ENCODE measurements at regions of chr1 and their contacts with region 1.

Region 1: DNA sequence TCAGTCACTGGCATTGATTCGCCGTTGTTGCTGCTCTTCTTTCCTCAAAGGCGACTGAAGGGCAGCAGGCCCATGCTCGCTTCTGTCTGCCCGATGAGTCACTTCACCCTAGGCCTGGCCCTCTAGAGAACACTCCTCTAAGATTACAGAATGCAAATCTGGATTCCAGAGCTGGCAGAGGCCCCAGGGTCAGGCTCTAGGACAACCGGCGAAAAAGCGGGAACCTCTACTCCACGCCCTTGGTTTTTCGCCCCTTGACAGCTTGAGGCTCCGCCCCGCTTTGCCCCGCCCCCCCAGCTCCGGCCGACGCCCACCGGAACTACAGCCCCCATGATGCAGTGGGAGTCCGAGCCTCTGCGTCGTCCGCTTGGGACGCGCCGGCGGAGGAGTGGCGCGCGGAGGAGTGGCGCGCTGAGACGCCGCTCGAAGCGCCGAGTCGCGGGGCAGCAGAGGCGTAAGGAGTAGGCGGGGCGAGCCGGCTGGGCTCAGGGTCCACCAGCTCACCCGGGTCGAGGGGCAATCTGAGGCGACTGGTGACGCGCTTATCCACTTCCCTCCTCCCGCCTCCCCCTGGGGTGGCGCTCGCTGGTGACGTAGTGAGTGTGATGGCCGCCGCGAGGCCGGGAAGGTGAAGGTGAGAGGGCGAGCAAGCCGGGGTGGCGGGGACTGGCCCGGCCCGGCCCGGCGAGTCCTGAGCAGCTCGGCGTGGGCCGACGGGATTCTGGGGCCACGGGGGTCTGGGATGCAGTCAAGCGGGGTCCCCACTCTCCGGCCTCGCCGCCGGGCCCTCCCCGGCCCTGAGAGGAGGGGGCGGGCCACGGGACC is at the start of gene MFN2:
- DNase-seq: peak; percentile 97
- H3K4me3 Mint-ChIP-seq: peak within 1 kb of the TSS; percentile 78
- H3K27ac Mint-ChIP-seq: peak within 1 kb of the TSS; percentile 99
- H3K4me1 Mint-ChIP-seq: peaks cover 29% of the 10 kb centered on the region
- H3K27me3 Mint-ChIP-seq: no peaks in the 10 kb centered on the region
- CTCF ChIP-seq: no peak
- total RNA-seq, gene MFN2: 95.6 and 105 TPM in 2 replicates

Region 2: GRCh38 chr1:11784993-11785769 is 194.9 kb before region 1 on chr1:
- CTCF ChIA-PET with region 1: no interaction called
- POLR2A ChIA-PET with region 1: no interaction called
- intact Hi-C with region 1: no loop called
- DNase-seq: peak; percentile 69
- H3K4me3 Mint-ChIP-seq: no peak overlapping the region
- H3K27ac Mint-ChIP-seq: no peak overlapping the region
- H3K4me1 Mint-ChIP-seq: peaks cover under 1% of the 10 kb centered on the region
- H3K27me3 Mint-ChIP-seq: no peaks in the 10 kb centered on the region
- CTCF ChIP-seq: peak; percentile 87

Region 3: DNA sequence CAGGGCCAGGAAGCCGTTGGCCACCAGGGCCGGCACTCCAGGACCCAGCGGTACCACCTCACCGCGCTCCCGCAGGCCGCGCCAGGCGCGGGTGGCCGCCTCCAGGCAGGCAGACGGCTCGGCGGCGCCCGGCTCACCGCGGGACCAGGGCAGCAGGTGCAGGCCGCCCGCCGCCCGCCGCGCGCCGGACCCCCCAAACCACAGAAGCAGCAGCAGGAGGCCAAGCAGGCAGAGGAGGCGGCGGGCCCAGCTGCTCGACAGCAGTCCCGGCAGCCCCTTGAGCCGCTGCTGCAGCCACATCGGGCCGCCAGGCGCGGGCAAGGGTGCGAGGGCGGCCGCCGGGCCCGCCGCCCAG is 54.1 kb before region 1 on chr1:
- CTCF ChIA-PET with region 1: no interaction called
- POLR2A ChIA-PET with region 1: interaction called, 24 read pairs
- intact Hi-C with region 1: no loop called
- DNase-seq: no peak
- H3K4me3 Mint-ChIP-seq: peak overlapping the region; percentile 75
- H3K27ac Mint-ChIP-seq: peak overlapping the region; percentile 60
- H3K4me1 Mint-ChIP-seq: peaks cover 22% of the 10 kb centered on the region
- H3K27me3 Mint-ChIP-seq: no peaks in the 10 kb centered on the region
- CTCF ChIP-seq: no peak

Region 4: DNA sequence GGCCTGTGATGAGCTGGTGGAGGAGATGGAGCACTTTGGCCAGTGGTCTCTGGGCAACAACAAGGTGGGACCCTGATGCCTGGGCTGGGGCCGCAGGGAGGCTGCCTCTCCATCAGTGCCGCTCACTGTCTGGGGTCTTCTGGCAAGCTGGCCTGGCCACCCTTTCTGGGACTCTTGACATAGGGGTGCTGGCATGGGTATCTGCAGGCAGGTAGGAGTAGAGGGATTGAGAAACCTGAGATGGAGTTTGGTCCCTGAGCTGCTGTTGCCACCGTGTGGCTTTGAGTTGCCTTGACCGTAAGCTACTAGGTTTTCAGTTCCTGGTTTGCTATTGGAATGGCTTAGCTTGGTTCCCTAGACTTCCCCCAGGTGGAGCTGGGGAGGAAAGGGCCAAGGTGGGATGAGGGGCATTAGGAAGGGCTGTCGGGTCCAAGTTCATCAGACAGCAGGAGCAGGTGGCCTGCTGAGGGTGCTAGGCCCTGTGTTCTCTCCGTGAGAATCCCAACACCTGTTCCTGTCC is 13.0 kb before region 1 on chr1:
- CTCF ChIA-PET with region 1: interaction called, 12 read pairs
- POLR2A ChIA-PET with region 1: interaction called, 53 read pairs
- intact Hi-C with region 1: no loop called
- DNase-seq: peak; percentile 79
- H3K4me3 Mint-ChIP-seq: peak overlapping the region; percentile 40
- H3K27ac Mint-ChIP-seq: peak overlapping the region; percentile 23
- H3K4me1 Mint-ChIP-seq: no peaks in the 10 kb centered on the region
- H3K27me3 Mint-ChIP-seq: no peaks in the 10 kb centered on the region
- CTCF ChIP-seq: peak; percentile 65

Region 5: GRCh38 chr1:12001249-12001917 is 21.3 kb after region 1 on chr1:
- CTCF ChIA-PET with region 1: interaction called, 3 read pairs
- POLR2A ChIA-PET with region 1: interaction called, 21 read pairs
- intact Hi-C with region 1: no loop called
- DNase-seq: peak; percentile 61
- H3K4me3 Mint-ChIP-seq: no peak overlapping the region
- H3K27ac Mint-ChIP-seq: peak overlapping the region; percentile 79
- H3K4me1 Mint-ChIP-seq: peaks cover 11% of the 10 kb centered on the region
- H3K27me3 Mint-ChIP-seq: no peaks in the 10 kb centered on the region
- CTCF ChIP-seq: peak; percentile 10

Region 6: DNA sequence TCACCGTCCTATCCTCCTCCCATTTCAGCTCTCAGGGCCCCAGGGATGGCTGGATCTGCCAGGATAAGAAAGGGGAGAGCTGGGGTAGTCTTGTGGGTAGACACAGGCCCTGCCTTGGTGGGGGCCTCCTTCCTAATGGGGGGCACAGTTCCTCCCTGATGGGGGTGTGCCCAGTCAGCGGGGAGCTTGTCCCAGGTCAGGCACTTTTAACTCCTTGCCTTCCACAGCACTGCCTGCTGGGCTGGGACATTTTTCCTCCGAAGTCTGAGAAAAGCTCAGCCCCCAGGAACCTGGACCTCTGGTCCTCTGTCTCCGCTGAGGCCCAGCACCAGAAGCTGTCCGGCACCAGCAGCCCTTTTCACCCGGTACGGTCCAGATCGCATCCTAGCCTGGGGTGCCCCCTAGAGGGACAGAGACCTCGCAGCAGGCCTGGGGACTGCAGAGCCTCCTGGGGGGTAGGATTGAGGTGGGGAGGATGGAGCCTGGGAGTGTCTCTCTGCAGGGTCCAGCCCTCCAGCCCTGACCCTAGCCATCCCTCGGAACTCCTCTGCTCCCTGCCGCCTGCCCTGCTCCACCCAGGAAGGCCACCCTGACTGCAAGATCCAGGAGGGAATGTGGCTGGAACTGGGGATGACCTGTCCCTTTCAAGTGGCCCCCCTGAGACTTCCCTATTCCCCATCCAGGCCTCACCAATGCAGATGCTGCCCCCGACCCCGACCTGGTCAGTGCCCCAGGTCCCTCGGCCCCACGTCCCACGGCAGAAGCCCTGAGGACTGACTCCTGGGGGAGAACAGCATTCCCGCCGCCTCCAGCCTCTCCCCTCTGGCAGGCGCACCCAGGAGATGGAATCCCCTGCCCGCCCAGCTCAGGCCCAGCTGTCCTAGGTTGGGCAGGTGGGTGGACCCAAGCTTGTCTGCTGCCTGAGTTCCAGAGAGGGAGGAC is 51.2 kb after region 1 on chr1:
- CTCF ChIA-PET with region 1: no interaction called
- POLR2A ChIA-PET with region 1: no interaction called
- intact Hi-C with region 1: loop called (anchors 1 kb)
- DNase-seq: peak; percentile 40
- H3K4me3 Mint-ChIP-seq: no peak overlapping the region
- H3K27ac Mint-ChIP-seq: no peak overlapping the region
- H3K4me1 Mint-ChIP-seq: no peaks in the 10 kb centered on the region
- H3K27me3 Mint-ChIP-seq: no peaks in the 10 kb centered on the region
- CTCF ChIP-seq: peak; percentile 56

Region 7: GRCh38 chr1:12745992-12746323 is 765.9 kb after region 1 on chr1 and contains the start of gene CFAP107:
- CTCF ChIA-PET with region 1: no interaction called
- POLR2A ChIA-PET with region 1: no interaction called
- intact Hi-C with region 1: no loop called
- DNase-seq: no peak
- H3K4me3 Mint-ChIP-seq: no peak within 1 kb of the TSS
- H3K27ac Mint-ChIP-seq: no peak within 1 kb of the TSS
- H3K4me1 Mint-ChIP-seq: peaks cover 10% of the 10 kb centered on the region
- H3K27me3 Mint-ChIP-seq: peaks cover 56% of the 10 kb centered on the region
- CTCF ChIP-seq: no peak
- total RNA-seq, gene CFAP107: not detected in 2 replicates

Measured in MCF 10A (cell line).